PC-9 (cell line): ENCODE measurements at regions of chr19 and their contacts with region 1.

Region 1: DNA sequence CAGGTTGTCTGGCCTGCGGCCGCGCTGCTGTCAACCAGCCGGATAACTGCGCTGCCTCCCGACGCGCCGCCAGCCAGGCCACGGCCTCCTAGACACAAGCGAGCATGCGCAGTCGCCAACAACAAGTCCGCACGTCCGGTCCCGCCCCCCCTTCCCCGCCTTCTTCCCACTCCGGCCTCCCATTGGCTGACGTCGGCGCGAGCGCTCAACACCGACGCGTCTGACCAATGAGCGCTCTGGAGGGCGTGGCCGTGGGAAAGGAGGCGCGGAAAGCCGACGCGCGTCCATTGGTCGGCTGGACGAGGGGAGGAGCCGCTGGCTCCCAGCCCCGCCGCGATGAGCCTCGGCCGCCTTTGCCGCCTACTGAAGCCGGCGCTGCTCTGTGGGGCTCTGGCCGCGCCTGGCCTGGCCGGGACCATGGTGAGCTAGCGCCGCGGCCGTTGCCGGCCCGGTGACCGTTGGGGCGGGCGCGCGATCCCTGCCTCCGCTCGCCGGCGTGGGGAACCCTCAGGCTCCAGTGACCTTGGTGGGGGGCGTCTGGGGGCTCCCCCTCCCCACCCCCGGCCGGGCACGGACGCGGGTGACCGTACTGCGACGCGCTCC is at the start of gene GPX4:
- DNase-seq: peak; percentile 93 to 96
- H3K4me3 ChIP-seq: peak within 1 kb of the TSS; percentile 78
- H3K27ac ChIP-seq: peak within 1 kb of the TSS; percentile 97
- H3K4me1 ChIP-seq: peaks cover 72% of the 10 kb centered on the region
- H3K27me3 ChIP-seq: no peaks in the 10 kb centered on the region
- CTCF ChIP-seq: no peak
- total RNA-seq, gene GPX4: 465 and 489 TPM in 2 replicates

Region 2: GRCh38 chr19:1001538-1002166 is 102.2 kb before region 1 on chr19:
- CTCF ChIA-PET with region 1: no interaction called
- POLR2A ChIA-PET with region 1: interaction called, 12 read pairs
- intact Hi-C with region 1: no loop called
- DNase-seq: peak in 1 of 2 experiments; percentile 59
- H3K4me3 ChIP-seq: no peak overlapping the region
- H3K27ac ChIP-seq: no peak overlapping the region
- H3K4me1 ChIP-seq: peaks cover 2% of the 10 kb centered on the region
- H3K27me3 ChIP-seq: peaks cover 34% of the 10 kb centered on the region
- CTCF ChIP-seq: peak; percentile 94

Region 3: GRCh38 chr19:1039646-1040475 is 63.9 kb before region 1 on chr19 and contains the start of gene ABCA7:
- CTCF ChIA-PET with region 1: no interaction called
- POLR2A ChIA-PET with region 1: interaction called, 14 read pairs
- intact Hi-C with region 1: no loop called
- DNase-seq: peak; percentile 92 to 99
- H3K4me3 ChIP-seq: peak within 1 kb of the TSS; percentile 72
- H3K27ac ChIP-seq: no peak within 1 kb of the TSS
- H3K4me1 ChIP-seq: peaks cover 10% of the 10 kb centered on the region; the same call in 1 of the 2 replicates
- H3K27me3 ChIP-seq: no peaks in the 10 kb centered on the region
- CTCF ChIP-seq: no peak
- total RNA-seq, gene ABCA7: 29.9 and 32.0 TPM in 2 replicates

Region 4: DNA sequence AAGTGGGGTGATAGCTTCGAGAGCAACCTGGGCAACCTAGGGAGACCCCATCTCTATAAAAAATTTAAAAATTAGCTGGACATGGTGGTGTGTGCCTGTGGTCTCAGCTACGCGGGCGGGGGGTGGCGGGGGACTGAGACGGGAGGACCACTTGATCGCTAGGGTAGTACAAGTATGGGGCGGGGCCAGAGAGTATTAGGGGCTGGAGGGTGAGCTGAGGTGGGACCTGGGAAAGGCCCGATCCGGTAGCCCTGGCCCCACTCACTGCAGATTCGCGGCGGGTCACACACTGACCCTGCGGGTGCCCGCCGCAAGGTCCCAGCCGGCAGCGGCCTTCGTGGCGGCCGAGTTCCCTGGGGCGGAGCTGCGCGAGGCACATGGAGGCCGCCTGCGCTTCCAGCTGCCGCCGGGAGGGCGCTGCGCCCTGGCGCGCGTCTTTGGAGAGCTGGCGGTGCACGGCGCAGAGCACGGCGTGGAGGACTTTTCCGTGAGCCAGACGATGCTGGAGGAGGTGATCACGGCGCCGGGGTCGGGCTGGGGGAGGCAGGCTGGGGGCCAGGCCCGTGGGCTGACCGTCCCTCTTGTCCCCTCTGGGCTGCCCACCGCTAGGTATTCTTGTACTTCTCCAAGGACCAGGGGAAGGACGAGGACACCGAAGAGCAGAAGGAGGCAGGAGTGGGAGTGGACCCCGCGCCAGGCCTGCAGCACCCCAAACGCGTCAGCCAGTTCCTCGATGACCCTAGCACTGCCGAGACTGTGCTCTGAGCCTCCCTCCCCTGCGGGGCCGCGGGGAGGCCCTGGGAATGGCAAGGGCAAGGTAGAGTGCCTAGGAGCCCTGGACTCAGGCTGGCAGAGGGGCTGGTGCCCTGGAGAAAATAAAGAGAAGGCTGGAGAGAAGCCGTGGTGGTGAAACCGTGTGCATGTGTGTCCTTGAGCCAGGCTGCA is 38.9 kb before region 1 on chr19:
- CTCF ChIA-PET with region 1: interaction called, 16 read pairs
- POLR2A ChIA-PET with region 1: interaction called, 27 read pairs
- intact Hi-C with region 1: loop called (anchors 5 kb)
- DNase-seq: peak in 1 of 2 experiments; percentile 54
- H3K4me3 ChIP-seq: peak overlapping the region; percentile 15; the same call in 1 of the 2 replicates
- H3K27ac ChIP-seq: peak overlapping the region; percentile 57
- H3K4me1 ChIP-seq: peaks cover 19% of the 10 kb centered on the region
- H3K27me3 ChIP-seq: no peaks in the 10 kb centered on the region
- CTCF ChIP-seq: peak; percentile 62; the same call in 1 of the 2 replicates

Region 5: DNA sequence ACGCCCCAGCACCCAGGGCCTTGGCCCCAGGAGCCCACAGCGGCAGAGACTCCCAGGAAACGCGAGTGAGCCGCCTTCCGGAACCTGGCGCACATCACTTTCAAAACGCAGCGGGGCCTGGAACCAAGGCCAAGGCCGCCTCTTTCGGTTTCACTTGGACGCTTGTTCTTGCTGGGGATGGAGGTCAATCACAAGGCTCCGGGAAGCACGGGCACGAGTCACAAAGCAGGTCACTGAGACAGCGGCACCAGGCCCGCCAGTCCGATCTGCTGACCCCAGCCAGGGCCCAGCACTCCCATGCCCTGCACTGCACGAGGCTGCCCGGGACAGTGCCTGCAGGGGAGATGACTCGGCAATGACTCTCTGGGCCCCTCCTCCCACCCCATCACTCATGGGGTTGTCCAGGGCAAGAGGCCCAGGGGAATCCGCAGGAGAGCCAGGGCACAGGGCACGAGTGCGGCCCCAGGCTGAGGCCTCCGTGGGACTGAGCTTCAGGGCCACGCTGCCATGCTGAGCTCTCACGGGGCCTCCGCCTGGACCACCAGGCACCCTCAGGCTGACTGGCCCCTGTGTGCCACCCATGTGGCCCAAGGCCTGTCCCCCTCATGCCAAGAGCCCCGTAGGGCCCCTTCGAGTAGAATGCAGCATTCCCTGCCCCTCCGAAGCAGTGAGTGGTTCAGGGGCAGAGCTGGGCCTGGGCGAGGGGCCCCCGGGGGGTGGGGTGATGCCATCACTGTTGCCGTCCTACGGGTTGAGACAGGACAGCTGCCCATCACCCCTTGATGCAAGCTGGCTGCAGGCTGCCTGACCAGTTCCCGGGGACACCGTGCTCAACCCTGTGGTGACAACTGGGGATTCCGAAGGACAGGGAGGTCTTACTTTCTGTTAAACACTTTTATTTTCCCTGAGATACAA is 65.3 kb after region 1 on chr19:
- CTCF ChIA-PET with region 1: interaction called, 3 read pairs
- POLR2A ChIA-PET with region 1: no interaction called
- intact Hi-C with region 1: loop called (anchors 2 kb)
- DNase-seq: peak; percentile 74 to 78
- H3K4me3 ChIP-seq: peak overlapping the region; percentile 78
- H3K27ac ChIP-seq: peak overlapping the region; percentile 84
- H3K4me1 ChIP-seq: peaks cover 50% of the 10 kb centered on the region
- H3K27me3 ChIP-seq: no peaks in the 10 kb centered on the region
- CTCF ChIP-seq: no peak